ENCODE measurements at regions of chr4 and their contacts with region 1.

Region 1: GRCh38 chr4:81260443-81261101 is 45.5 kb upstream of the PRKG2 start:
- DNase-seq: peak; percentile 1
- H3K4me3 ChIP-seq: no peak overlapping the region
- H3K27ac ChIP-seq: no peak overlapping the region
- H3K4me1 ChIP-seq: no peaks in the 10 kb centered on the region
- H3K27me3 ChIP-seq: no peaks in the 10 kb centered on the region
- CTCF ChIP-seq: peak; percentile 47 to 63

Region 2: DNA sequence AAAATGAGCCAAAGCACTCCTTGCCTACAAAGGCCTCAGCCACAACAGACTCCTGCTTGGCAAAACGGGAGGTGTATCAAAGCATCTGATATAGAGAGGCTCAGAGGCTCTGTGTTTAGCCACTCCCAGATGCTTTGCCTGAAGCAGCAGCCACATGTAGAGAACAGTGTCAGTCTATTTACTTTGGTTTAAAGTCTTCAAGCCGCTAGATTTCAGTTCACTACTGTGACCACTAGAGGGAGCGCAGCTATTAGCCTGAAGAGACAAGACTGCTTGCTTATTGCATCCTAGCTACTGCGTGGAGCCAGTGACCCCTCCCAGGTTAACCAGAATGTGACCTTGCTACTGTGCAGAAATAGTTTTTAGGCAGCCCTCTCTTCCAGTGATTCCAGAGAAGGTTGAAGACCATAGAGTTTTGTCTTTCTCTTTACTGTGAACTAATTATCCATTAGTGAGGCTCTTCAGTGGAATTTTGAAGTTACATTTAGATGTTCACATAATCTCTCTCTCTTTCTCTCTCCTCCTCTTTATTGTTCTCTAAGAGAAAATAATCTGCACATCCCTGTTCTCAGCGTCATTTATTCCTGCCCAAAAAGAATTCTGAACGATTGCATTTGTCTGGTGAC is 190.8 kb before region 1 on chr4:
- CTCF ChIA-PET with region 1: no interaction called
- dilution Hi-C with region 1: no loop called
- in situ Hi-C with region 1: loop called (anchors 25 kb)
- intact Hi-C with region 1: loop called (anchors 5 kb)
- DNase-seq: peak; percentile 73
- H3K4me3 ChIP-seq: no peak overlapping the region
- H3K27ac ChIP-seq: no peak overlapping the region
- H3K4me1 ChIP-seq: no peaks in the 10 kb centered on the region
- H3K27me3 ChIP-seq: no peaks in the 10 kb centered on the region
- CTCF ChIP-seq: peak; percentile 94 to 95

Region 3: GRCh38 chr4:81084029-81084428 is 176.5 kb before region 1 on chr4:
- CTCF ChIA-PET with region 1: interaction called, 3 read pairs
- dilution Hi-C with region 1: no loop called
- in situ Hi-C with region 1: loop called (anchors 25 kb)
- intact Hi-C with region 1: loop called (anchors 1 kb)
- DNase-seq: peak; percentile 68
- H3K4me3 ChIP-seq: no peak overlapping the region
- H3K27ac ChIP-seq: no peak overlapping the region
- H3K4me1 ChIP-seq: no peaks in the 10 kb centered on the region
- H3K27me3 ChIP-seq: no peaks in the 10 kb centered on the region
- CTCF ChIP-seq: peak; percentile 70 to 99

Region 4: GRCh38 chr4:81214881-81215868 is 45.4 kb before region 1 on chr4 and contains the start of gene PRKG2:
- CTCF ChIA-PET with region 1: no interaction called
- dilution Hi-C with region 1: no loop called
- in situ Hi-C with region 1: no loop called
- intact Hi-C with region 1: loop called (anchors 2 kb)
- DNase-seq: peak; percentile 39
- H3K4me3 ChIP-seq: peak within 1 kb of the TSS; percentile 39 to 50 (median 46)
- H3K27ac ChIP-seq: no peak within 1 kb of the TSS
- H3K4me1 ChIP-seq: peaks cover 12% of the 10 kb centered on the region
- H3K27me3 ChIP-seq: peaks cover 11% of the 10 kb centered on the region
- CTCF ChIP-seq: no peak
- total RNA-seq, gene PRKG2: 2.1 to 11.0 TPM

Region 5: DNA sequence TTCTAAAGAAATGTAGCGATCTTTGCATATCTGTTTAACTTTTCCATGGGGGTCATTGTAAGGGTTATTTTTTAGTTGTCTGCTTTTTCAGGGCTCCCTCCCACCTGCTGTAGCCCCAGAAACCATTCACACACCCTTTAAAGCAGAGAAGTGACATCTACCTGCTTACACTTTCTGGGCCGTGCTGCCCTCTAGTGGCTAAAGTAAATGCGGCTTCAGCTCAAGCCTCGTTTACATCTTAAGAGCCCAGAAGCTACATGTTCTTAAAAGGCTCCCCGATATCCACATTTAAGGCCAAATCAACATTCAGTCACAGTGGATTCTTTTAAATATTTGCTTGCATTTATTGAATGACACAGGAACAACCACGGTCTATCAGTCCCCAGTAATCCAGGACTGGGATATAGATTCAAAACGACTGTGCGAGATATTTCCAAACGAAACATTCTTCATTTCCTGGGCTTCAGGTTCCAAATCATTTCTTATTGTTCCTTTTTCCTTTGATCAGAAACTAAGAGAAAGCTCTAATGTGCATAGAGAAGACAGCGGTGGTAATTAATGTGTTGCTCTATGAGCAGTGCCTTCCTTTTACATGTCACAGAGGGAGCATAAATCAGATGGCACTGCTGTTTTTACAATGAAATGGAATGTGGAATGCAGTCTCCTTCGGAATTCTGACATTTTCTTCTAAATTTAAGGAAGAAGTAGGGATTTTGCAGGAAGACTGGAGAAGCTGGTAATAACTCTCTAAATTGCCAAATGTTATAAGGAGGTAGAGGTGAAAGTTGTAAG is 91.3 kb after region 1 on chr4:
- CTCF ChIA-PET with region 1: no interaction called
- dilution Hi-C with region 1: no loop called
- in situ Hi-C with region 1: no loop called
- intact Hi-C with region 1: loop called (anchors 2 kb)
- DNase-seq: peak; percentile 39
- H3K4me3 ChIP-seq: no peak overlapping the region
- H3K27ac ChIP-seq: no peak overlapping the region
- H3K4me1 ChIP-seq: no peaks in the 10 kb centered on the region
- H3K27me3 ChIP-seq: no peaks in the 10 kb centered on the region
- CTCF ChIP-seq: peak; percentile 90 to 96

Measured in mammary epithelial cell (primary cell).